ENCODE measurements at regions of chr15 and their contacts with region 1.

Region 1: DNA sequence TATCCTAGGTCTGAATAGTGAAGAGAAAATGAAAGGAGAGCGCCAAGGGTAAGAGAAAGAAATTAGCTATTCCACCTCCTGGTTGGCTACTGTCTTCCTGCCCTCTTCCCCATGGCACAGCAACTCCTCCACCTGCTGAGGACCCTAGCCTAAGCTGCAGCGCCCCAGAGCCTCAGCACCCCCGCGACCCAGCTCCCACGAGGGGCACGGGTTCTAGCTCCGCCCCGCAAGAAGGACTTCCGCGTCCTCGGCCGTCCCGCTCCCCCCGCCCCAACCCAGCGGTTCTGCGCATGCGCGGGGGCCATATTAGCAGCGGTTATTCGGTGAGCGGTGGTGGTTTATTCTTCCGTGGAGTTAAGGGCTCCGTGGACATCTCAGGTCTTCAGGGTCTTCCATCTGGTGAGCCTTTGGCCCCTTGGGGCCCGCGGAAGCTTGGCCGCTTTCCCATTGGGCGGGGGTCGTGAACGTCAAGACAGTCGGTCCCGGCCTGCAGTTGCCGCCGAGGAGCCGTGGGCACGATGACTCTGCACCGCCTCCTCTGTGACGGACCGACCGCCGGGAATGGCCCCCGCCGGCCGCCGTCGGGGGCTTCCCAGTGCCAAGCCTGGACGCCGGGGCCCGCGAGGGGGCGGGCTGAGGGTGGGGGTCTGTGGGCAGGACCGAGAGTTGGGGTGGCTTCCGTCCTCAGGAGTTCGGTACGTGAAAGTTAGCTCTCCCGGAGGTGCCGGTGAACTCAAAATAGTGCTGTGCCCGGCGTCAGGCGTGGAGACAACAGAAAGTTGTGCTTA is at the start of gene PSMA4:
- DNase-seq: peak; percentile 94 to 98 (median 98)
- ATAC-seq: peak; percentile 93
- H3K4me3 ChIP-seq: peak within 1 kb of the TSS; percentile 79
- H3K27ac ChIP-seq: peak within 1 kb of the TSS; percentile 97
- H3K4me1 ChIP-seq: peaks cover 3% of the 10 kb centered on the region in 2 experiments; a peak in 2 of 5 replicates
- H3K27me3 ChIP-seq: no peaks in the 10 kb centered on the region
- CTCF ChIP-seq: no peak
- EP300 ChIP-seq: no peak
- POLR2A ChIP-seq: peak; percentile 97
- RAD21 ChIP-seq: no peak; a peak in 1 of 4 replicates
- polyA plus RNA-seq, gene PSMA4: 1,794 to 1,857 TPM

Region 2: GRCh38 chr15:78506971-78507830 is 33.1 kb before region 1 on chr15 and contains the start of gene HYKK:
- CTCF ChIA-PET with region 1: no interaction called
- POLR2A ChIA-PET with region 1: interaction called, 8 read pairs
- in situ Hi-C with region 1: no loop called
- intact Hi-C with region 1: loop called (anchors 5 kb)
- DNase-seq: peak; percentile 96 to 99 (median 98)
- ATAC-seq: peak; percentile 99
- H3K4me3 ChIP-seq: peak within 1 kb of the TSS; percentile 60
- H3K27ac ChIP-seq: peak within 1 kb of the TSS; percentile 58
- H3K4me1 ChIP-seq: peaks cover 4 to 10% of the 10 kb centered on the region in 2 experiments; a peak in 4 of 5 replicates
- H3K27me3 ChIP-seq: no peaks in the 10 kb centered on the region
- CTCF ChIP-seq: peak in 1 of 3 experiments; percentile 15; a peak in 1 of 6 replicates
- EP300 ChIP-seq: no peak
- POLR2A ChIP-seq: peak; percentile 74
- RAD21 ChIP-seq: no peak
- polyA plus RNA-seq, gene HYKK: 3.0 to 3.1 TPM

Region 3: DNA sequence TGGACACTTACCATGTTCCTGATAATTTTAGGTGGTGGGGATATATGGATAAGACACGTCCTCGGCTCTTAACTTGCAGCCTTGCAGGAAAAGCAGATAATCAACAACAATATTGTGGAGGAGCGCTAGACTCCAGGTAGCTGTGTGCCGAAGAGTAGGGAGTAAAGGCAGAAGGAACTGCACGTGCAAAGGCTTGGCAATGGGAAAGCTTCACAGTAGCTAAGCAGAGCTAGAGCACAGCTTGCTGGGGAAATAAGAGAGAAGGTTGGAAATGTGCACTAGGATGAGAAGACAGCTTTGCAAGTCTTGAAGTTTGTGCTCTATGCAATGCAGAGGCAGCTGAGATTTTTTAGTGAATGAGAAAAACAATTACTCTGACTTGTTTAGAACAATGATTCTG is 12.3 kb after region 1 on chr15:
- CTCF ChIA-PET with region 1: no interaction called
- POLR2A ChIA-PET with region 1: interaction called, 22 read pairs
- in situ Hi-C with region 1: no loop called
- intact Hi-C with region 1: no loop called
- DNase-seq: no peak
- ATAC-seq: peak; percentile 31
- H3K4me3 ChIP-seq: no peak overlapping the region
- H3K27ac ChIP-seq: no peak overlapping the region
- H3K4me1 ChIP-seq: no peaks in the 10 kb centered on the region
- H3K27me3 ChIP-seq: no peaks in the 10 kb centered on the region
- CTCF ChIP-seq: no peak
- EP300 ChIP-seq: no peak
- POLR2A ChIP-seq: no peak
- RAD21 ChIP-seq: no peak